Natural killer cell (primary cell): ENCODE measurements at regions of chr9 and their contacts with region 1.

Region 1: DNA sequence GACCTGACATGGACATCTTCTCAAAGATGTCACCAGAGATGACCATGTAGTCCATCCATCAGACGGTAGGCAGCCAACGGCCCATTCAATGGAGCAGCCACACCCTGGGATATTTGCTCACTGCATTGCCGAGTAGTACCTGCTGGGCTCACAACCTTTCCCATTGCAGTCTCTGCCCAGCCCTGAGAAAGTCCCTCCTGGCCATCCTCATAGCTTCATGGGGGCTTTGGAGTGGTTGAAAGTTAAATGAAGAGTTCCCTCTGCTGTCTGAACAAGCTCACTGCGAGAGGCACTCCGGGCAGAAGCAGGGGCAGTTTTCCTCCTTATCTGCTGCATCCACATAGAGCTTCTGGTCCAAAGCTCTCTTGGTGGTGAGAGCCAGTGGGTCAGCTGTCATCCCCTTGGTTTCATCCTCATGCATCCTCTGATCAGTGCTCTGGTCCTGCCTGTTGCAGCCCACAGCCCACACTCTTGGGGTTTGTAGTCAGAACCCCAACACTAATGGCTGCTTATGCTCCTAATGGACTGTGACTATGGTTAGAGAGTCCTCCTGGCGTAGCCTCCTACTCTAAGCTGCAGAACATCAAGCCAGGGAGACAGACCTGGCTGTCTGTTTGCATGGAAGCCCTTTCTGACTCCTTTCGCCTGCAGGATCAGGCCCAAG is 23.4 kb downstream of the TNFSF8 start:
- DNase-seq: peak in 1 of 2 donors; percentile 67
- ATAC-seq: peak in 1 of 3 donors; percentile 59
- H3K4me3 ChIP-seq: no peak overlapping the region
- H3K4me3 Mint-ChIP-seq: no peak overlapping the region
- H3K27ac ChIP-seq: no peak overlapping the region
- H3K27ac Mint-ChIP-seq: no peak overlapping the region
- H3K4me1 ChIP-seq: peaks cover 55% of the 10 kb centered on the region
- H3K4me1 Mint-ChIP-seq: peaks cover 39 to 62% of the 10 kb centered on the region in 2 donors
- H3K27me3 ChIP-seq: no peaks in the 10 kb centered on the region
- H3K27me3 Mint-ChIP-seq: no peaks in the 10 kb centered on the region
- CTCF ChIP-seq: peak; percentile 61

Region 2: DNA sequence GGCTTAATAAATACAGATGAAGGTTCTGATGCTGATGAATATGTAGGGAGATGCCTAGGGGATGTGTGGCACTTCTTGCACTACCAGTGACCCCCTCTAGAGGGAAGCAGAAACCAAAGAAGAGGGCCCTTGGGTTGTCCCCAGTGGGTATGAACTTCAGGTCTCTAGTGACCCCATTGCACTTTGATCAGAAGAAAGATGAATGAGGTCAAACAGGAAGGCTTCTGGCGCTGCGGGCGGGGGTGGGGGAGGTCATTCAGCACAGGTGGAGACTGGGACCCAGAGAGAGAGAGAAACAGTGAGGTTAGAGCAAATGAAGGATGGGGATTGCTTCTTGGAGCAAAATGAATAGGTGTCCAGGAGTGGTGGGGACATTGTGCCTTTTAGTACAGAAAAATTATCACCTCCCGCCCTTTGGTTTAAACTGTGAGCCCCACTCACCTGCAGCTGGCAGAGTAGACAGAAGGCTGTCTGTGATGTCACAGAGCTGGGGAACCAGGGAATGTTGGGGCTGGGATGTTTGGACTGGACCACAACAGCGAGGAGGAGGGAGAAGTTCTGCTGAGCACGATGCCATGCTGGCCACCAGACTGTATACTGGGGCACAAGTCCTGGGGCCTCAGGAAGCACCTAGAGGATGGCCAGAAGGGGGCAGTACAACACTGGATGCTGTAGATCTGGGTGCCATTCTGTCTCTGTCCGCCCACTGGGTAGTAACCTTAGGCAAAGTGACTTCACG is 225.3 kb before region 1 on chr9 and contains the start of gene TEX48:
- intact Hi-C with region 1: loop called (anchors 2 kb)
- DNase-seq: peak; percentile 30 to 92
- ATAC-seq: peak; percentile 87 to 90 (median 88)
- H3K4me3 ChIP-seq: no peak within 1 kb of the TSS
- H3K4me3 Mint-ChIP-seq: no peak within 1 kb of the TSS
- H3K27ac ChIP-seq: no peak within 1 kb of the TSS
- H3K27ac Mint-ChIP-seq: no peak within 1 kb of the TSS
- H3K4me1 ChIP-seq: peaks cover 6% of the 10 kb centered on the region
- H3K4me1 Mint-ChIP-seq: peaks cover 0 to 5% of the 10 kb centered on the region in 2 donors
- H3K27me3 ChIP-seq: no peaks in the 10 kb centered on the region
- H3K27me3 Mint-ChIP-seq: peaks cover 4 to 27% of the 10 kb centered on the region in 2 donors
- CTCF ChIP-seq: peak; percentile 81
- total RNA-seq, gene TEX48: not detected

Region 3: DNA sequence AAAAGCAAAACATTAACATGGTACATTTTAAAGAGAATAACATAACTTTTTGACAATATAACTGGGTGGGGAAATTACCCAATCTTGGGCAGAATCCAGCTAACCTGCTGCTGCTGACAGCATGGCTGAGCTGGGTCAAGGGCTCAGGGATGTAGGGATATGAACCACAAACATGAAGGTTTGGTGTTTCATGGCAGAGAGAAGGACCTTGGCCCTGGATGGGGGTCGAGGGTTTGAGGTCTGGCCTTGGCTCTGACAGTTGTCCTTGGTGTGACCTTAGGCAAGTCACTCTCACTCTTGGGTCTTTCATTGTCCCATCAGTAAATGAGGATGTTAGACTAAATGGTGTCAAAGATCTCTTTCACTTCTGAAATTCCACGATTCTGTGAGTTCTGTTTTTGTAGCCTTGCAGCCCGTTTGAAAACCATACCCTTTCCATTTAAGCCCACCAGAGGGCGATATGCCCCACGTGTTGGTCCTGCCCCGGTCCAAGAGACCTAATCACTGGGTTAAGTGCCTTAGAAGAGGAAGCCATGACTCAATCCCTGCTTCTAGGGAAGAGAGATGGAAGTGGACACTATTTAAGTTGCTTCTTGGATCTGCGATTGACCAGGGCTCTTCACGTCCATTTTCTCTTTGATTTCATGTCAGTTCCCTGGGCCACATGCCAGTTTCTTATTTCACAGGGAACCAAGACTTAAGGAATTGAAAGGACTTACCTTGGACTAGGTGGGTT is 168.3 kb before region 1 on chr9:
- intact Hi-C with region 1: loop called (anchors 1 kb)
- DNase-seq: peak; percentile 55 to 90
- ATAC-seq: peak; percentile 87 to 92 (median 88)
- H3K4me3 ChIP-seq: no peak overlapping the region
- H3K4me3 Mint-ChIP-seq: no peak overlapping the region
- H3K27ac ChIP-seq: no peak overlapping the region
- H3K27ac Mint-ChIP-seq: no peak overlapping the region
- H3K4me1 ChIP-seq: peaks cover 18% of the 10 kb centered on the region
- H3K4me1 Mint-ChIP-seq: peaks cover 9 to 16% of the 10 kb centered on the region in 2 donors
- H3K27me3 ChIP-seq: no peaks in the 10 kb centered on the region
- H3K27me3 Mint-ChIP-seq: no peaks in the 10 kb centered on the region
- CTCF ChIP-seq: peak; percentile 82

Region 4: DNA sequence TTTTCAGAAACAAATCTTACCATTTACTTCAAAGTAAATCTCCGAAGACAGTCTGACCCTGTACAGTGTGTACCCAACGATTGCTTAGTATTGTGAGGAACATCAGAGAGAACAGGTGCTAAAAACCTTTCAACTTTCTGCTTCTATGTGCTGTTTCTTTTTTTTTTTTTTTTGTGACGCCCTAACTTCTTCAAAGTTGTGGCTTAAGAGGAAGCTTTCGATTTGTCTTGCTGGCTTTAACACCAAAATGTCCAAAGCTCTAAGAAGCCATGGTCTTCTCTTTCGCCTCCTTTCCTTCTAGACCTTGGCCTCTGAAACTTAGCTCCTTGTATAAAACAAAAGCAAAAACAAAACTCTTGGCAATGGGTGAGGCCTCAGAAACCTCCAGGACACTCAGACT is 22.2 kb after region 1 on chr9:
- intact Hi-C with region 1: loop called (anchors 2 kb)
- DNase-seq: peak in 1 of 2 donors; percentile 73
- ATAC-seq: peak; percentile 45 to 64 (median 48)
- H3K4me3 ChIP-seq: peak overlapping the region; percentile 41
- H3K4me3 Mint-ChIP-seq: peak overlapping the region; percentile 92
- H3K27ac ChIP-seq: peak overlapping the region; percentile 75
- H3K27ac Mint-ChIP-seq: peak overlapping the region; percentile 88 to 94
- H3K4me1 ChIP-seq: peaks cover 26% of the 10 kb centered on the region
- H3K4me1 Mint-ChIP-seq: peaks cover 54 to 61% of the 10 kb centered on the region in 2 donors
- H3K27me3 ChIP-seq: no peaks in the 10 kb centered on the region
- H3K27me3 Mint-ChIP-seq: peaks cover 3 to 9% of the 10 kb centered on the region in 2 donors
- CTCF ChIP-seq: no peak

Region 5: GRCh38 chr9:115013998-115014397 is 107.0 kb after region 1 on chr9:
- intact Hi-C with region 1: loop called (anchors 5 kb)
- DNase-seq: peak; percentile 56 to 90
- ATAC-seq: peak; percentile 76 to 85 (median 78)
- H3K4me3 ChIP-seq: no peak overlapping the region
- H3K4me3 Mint-ChIP-seq: no peak overlapping the region
- H3K27ac ChIP-seq: no peak overlapping the region
- H3K27ac Mint-ChIP-seq: no peak overlapping the region
- H3K4me1 ChIP-seq: no peaks in the 10 kb centered on the region
- H3K4me1 Mint-ChIP-seq: no peaks in the 10 kb centered on the region
- H3K27me3 ChIP-seq: no peaks in the 10 kb centered on the region
- H3K27me3 Mint-ChIP-seq: peaks cover 6 to 10% of the 10 kb centered on the region in 2 donors
- CTCF ChIP-seq: peak; percentile 93